B cell (primary cell): ENCODE measurements at regions of chr12 and their contacts with region 1.

Region 1: DNA sequence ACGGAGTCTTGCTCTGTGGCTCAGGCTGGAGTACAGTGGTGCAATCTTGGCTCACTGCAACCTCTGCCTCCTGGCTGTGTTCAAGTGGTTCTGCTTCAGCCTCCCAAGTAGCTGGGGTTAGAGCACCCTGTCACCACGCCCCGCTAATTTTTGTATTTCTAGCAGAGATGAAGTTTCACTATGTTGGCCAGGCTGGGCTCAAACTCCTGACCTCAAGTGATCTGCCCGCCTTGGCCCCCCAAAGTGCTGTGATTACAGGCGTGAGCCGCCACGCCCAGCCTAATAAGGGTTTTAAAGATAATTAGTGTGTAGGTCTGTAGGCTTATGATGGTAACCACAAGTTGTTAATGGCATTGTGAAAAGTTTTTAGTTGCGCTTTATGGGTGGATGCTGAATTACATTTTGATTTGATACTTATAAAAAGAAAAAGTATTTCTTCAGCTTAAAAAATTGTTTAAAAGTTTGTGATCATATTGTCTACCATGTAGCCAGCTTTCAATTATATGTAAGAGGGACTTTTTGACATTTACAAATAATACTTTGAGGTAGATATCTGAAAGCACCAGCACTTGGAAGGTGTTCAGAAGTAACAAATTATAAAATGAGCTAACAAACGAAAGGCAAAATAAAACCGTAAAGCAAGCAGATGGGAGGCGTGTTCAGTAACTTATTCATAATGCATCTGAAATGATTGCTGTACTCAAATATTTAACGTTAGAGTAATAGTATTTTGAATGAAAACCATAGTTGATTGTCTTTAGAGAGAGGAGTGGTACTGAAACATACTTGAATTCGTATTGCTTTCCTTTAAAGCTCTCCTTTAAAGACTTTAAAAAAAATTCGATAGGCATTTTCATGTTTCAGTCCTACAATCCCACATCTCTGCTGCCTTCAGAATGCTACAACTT is 37.1 kb downstream of the MDM2 start:
- DNase-seq: no peak
- ATAC-seq: no peak
- H3K4me3 ChIP-seq: no peak overlapping the region
- H3K4me3 Mint-ChIP-seq: no peak overlapping the region
- H3K27ac ChIP-seq: no peak overlapping the region
- H3K27ac Mint-ChIP-seq: no peak overlapping the region
- H3K4me1 ChIP-seq: no peaks in the 10 kb centered on the region
- H3K4me1 Mint-ChIP-seq: no peaks in the 10 kb centered on the region
- H3K27me3 ChIP-seq: no peaks in the 10 kb centered on the region
- H3K27me3 Mint-ChIP-seq: no peaks in the 10 kb centered on the region
- CTCF ChIP-seq: no peak

Region 2: GRCh38 chr12:68831272-68831671 is 13.8 kb before region 1 on chr12:
- CTCF ChIA-PET with region 1: interaction called, 32 read pairs
- POLR2A ChIA-PET with region 1: no interaction called
- intact Hi-C with region 1: no loop called
- DNase-seq: no peak
- ATAC-seq: no peak
- H3K4me3 ChIP-seq: no peak overlapping the region
- H3K4me3 Mint-ChIP-seq: no peak overlapping the region
- H3K27ac ChIP-seq: no peak overlapping the region
- H3K27ac Mint-ChIP-seq: no peak overlapping the region
- H3K4me1 ChIP-seq: no peaks in the 10 kb centered on the region
- H3K4me1 Mint-ChIP-seq: peaks cover 5% of the 10 kb centered on the region
- H3K27me3 ChIP-seq: no peaks in the 10 kb centered on the region
- H3K27me3 Mint-ChIP-seq: no peaks in the 10 kb centered on the region
- CTCF ChIP-seq: no peak

Region 3: DNA sequence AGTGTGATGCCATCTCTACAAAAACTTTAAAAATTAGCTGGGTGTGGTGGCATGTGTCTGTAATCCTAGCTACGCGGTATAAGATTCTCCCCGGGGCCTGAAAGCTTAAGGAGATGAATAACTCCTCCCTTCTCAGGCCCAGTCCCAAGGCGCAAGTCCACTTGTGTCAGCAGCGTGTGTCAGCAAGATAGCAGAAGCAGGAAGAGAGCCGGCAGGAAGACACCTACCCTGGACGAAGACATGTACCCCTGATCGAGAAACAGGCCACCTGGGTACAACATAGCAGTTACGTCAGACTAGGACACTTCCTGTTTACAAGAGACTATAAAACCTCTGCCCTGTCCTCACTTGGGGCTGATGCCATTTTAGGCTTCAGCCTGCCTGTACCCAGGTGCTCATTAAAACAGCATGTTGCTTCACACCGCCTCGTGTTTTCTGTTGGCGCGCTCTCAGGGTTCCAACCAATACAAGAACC is 44.6 kb after region 1 on chr12:
- CTCF ChIA-PET with region 1: no interaction called
- POLR2A ChIA-PET with region 1: no interaction called
- intact Hi-C with region 1: no loop called
- DNase-seq: peak; percentile 57
- ATAC-seq: peak; percentile 74
- H3K4me3 ChIP-seq: no peak overlapping the region
- H3K4me3 Mint-ChIP-seq: peak overlapping the region; percentile 48
- H3K27ac ChIP-seq: no peak overlapping the region
- H3K27ac Mint-ChIP-seq: peak overlapping the region; percentile 93
- H3K4me1 ChIP-seq: peaks cover 12 to 16% of the 10 kb centered on the region in 2 donors
- H3K4me1 Mint-ChIP-seq: peaks cover 22% of the 10 kb centered on the region
- H3K27me3 ChIP-seq: no peaks in the 10 kb centered on the region
- H3K27me3 Mint-ChIP-seq: no peaks in the 10 kb centered on the region
- CTCF ChIP-seq: no peak